ENCODE measurements at regions of chr7 and their contacts with region 1.

Region 1: DNA sequence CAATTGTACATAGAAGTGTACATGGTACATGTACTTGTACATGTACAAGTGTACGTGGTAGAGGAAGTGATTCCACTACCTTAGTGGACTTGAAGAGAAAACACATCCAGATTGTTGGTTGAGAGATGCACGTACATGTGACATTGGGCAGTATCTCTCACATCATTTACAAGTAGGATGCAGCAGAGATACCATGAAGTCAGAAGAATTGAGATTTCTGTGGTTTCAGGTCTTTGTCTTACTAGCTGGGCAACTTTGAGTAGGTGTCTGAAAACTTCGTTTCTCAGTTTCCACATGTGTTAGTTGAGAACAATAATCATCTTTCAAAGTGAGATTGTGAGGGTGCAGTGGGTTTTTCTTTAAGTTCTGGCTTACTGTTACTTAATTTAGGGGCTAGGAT is 21.5 kb downstream of the CLDN12 start:
- DNase-seq: no peak
- H3K4me3 Mint-ChIP-seq: no peak overlapping the region
- H3K27ac Mint-ChIP-seq: peak overlapping the region; percentile 48
- H3K4me1 Mint-ChIP-seq: peaks cover 15% of the 10 kb centered on the region
- H3K27me3 Mint-ChIP-seq: no peaks in the 10 kb centered on the region

Region 2: GRCh38 chr7:90165724-90166123 is 259.0 kb before region 1 on chr7:
- CTCF ChIA-PET with region 1: interaction called, 10 read pairs
- POLR2A ChIA-PET with region 1: no interaction called
- intact Hi-C with region 1: no loop called
- DNase-seq: no peak
- H3K4me3 Mint-ChIP-seq: no peak overlapping the region
- H3K27ac Mint-ChIP-seq: no peak overlapping the region
- H3K4me1 Mint-ChIP-seq: no peaks in the 10 kb centered on the region
- H3K27me3 Mint-ChIP-seq: peaks cover 16% of the 10 kb centered on the region

Region 3: GRCh38 chr7:90262438-90262837 is 162.3 kb before region 1 on chr7:
- CTCF ChIA-PET with region 1: interaction called, 9 read pairs
- POLR2A ChIA-PET with region 1: no interaction called
- intact Hi-C with region 1: loop called (anchors 1 kb)
- DNase-seq: no peak
- H3K4me3 Mint-ChIP-seq: no peak overlapping the region
- H3K27ac Mint-ChIP-seq: no peak overlapping the region
- H3K4me1 Mint-ChIP-seq: no peaks in the 10 kb centered on the region
- H3K27me3 Mint-ChIP-seq: peaks cover 5% of the 10 kb centered on the region

Region 4: GRCh38 chr7:90346336-90347125 is 78.2 kb before region 1 on chr7 and contains the start of gene GTPBP10:
- CTCF ChIA-PET with region 1: interaction called, 9 read pairs
- POLR2A ChIA-PET with region 1: no interaction called
- intact Hi-C with region 1: loop called (anchors 1 kb)
- DNase-seq: peak; percentile 97
- H3K4me3 Mint-ChIP-seq: peak within 1 kb of the TSS; percentile 94
- H3K27ac Mint-ChIP-seq: peak within 1 kb of the TSS; percentile 93
- H3K4me1 Mint-ChIP-seq: peaks cover 40% of the 10 kb centered on the region
- H3K27me3 Mint-ChIP-seq: no peaks in the 10 kb centered on the region
- total RNA-seq, gene GTPBP10: 32.9 to 33.2 TPM

Region 5: GRCh38 chr7:90455163-90456030 is 30.7 kb after region 1 on chr7:
- CTCF ChIA-PET with region 1: interaction called, 13 read pairs
- POLR2A ChIA-PET with region 1: no interaction called
- intact Hi-C with region 1: no loop called
- DNase-seq: no peak
- H3K4me3 Mint-ChIP-seq: no peak overlapping the region
- H3K27ac Mint-ChIP-seq: no peak overlapping the region
- H3K4me1 Mint-ChIP-seq: peaks cover 6% of the 10 kb centered on the region
- H3K27me3 Mint-ChIP-seq: peaks cover 5% of the 10 kb centered on the region

Measured in activated CD4-positive, alpha-beta memory T cell treated with anti-CD3 and anti-CD28 coated beads for 36 hours (primary cell).